ENCODE measurements at regions of chr2 and their contacts with region 1.

Region 1: GRCh38 chr2:39227628-39228412 is 15.9 kb downstream of the CDKL4 start:
- DNase-seq: peak; percentile 58 to 83 (median 78)
- ATAC-seq: peak; percentile 93
- H3K4me3 ChIP-seq: peak overlapping the region; percentile 31
- H3K4me3 Mint-ChIP-seq: peak overlapping the region; percentile 49 to 85 (median 76)
- H3K27ac ChIP-seq: no peak overlapping the region
- H3K27ac Mint-ChIP-seq: peak overlapping the region in 4 of 9 donors; percentile 38 to 88 (median 65)
- H3K4me1 ChIP-seq: peaks cover 4 to 9% of the 10 kb centered on the region in 2 donors
- H3K4me1 Mint-ChIP-seq: peaks cover 8 to 43% (median 21%) of the 10 kb centered on the region in 7 donors
- H3K27me3 ChIP-seq: no peaks in the 10 kb centered on the region
- H3K27me3 Mint-ChIP-seq: peaks cover 0 to 6% (median 0%) of the 10 kb centered on the region in 5 donors

Region 2: DNA sequence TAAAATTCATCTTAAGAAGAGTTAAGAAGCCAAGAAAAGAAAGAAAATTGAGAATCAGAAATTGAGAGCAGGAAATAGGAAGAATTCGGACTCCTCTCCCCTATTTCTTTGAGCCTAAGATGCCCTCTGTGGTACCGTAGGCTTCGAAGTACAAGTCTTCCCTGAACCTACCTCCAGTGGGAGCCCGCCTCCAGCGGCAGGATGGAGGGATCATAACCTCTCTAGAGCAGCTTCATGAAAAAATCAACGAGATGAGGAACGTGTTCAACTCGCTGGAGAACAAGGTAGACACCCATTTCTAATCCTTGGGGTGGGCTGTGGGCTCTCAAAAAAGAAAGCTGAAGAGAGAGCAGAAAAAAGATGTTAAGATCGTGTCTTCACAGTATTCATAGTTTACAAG is 301.8 kb before region 1 on chr2:
- CTCF ChIA-PET with region 1: no interaction called
- POLR2A ChIA-PET with region 1: no interaction called
- intact Hi-C with region 1: no loop called
- DNase-seq: no peak
- ATAC-seq: no peak
- H3K4me3 ChIP-seq: no peak overlapping the region
- H3K4me3 Mint-ChIP-seq: no peak overlapping the region
- H3K27ac ChIP-seq: no peak overlapping the region
- H3K27ac Mint-ChIP-seq: no peak overlapping the region
- H3K4me1 ChIP-seq: no peaks in the 10 kb centered on the region
- H3K4me1 Mint-ChIP-seq: no peaks in the 10 kb centered on the region
- H3K27me3 ChIP-seq: no peaks in the 10 kb centered on the region
- H3K27me3 Mint-ChIP-seq: peaks cover 0 to 31% (median 7%) of the 10 kb centered on the region in 5 donors

Region 3: GRCh38 chr2:38947240-38948239 is 280.3 kb before region 1 on chr2:
- CTCF ChIA-PET with region 1: interaction called, 78 read pairs
- POLR2A ChIA-PET with region 1: interaction called, 3 read pairs
- intact Hi-C with region 1: loop called in 1 of 2 experiments (anchors 1 kb)
- DNase-seq: peak; percentile 8 to 57 (median 35)
- ATAC-seq: peak; percentile 67
- H3K4me3 ChIP-seq: no peak overlapping the region
- H3K4me3 Mint-ChIP-seq: no peak overlapping the region
- H3K27ac ChIP-seq: no peak overlapping the region
- H3K27ac Mint-ChIP-seq: peak overlapping the region in 1 of 9 donors; percentile 13
- H3K4me1 ChIP-seq: no peaks in the 10 kb centered on the region
- H3K4me1 Mint-ChIP-seq: peaks cover 0 to 3% (median 0%) of the 10 kb centered on the region in 7 donors
- H3K27me3 ChIP-seq: no peaks in the 10 kb centered on the region
- H3K27me3 Mint-ChIP-seq: peaks cover 0 to 6% (median 0%) of the 10 kb centered on the region in 5 donors

Region 4: GRCh38 chr2:39059366-39059952 is 168.4 kb before region 1 on chr2:
- CTCF ChIA-PET with region 1: interaction called, 198 read pairs
- POLR2A ChIA-PET with region 1: interaction called, 9 read pairs
- intact Hi-C with region 1: loop called (anchors 1 kb)
- DNase-seq: peak in 7 of 9 donors; percentile 15 to 73 (median 65)
- ATAC-seq: peak; percentile 45
- H3K4me3 ChIP-seq: no peak overlapping the region
- H3K4me3 Mint-ChIP-seq: no peak overlapping the region
- H3K27ac ChIP-seq: no peak overlapping the region
- H3K27ac Mint-ChIP-seq: peak overlapping the region in 2 of 9 donors; percentile 63 to 64
- H3K4me1 ChIP-seq: no peaks in the 10 kb centered on the region
- H3K4me1 Mint-ChIP-seq: peaks cover 0 to 33% (median 0%) of the 10 kb centered on the region in 7 donors
- H3K27me3 ChIP-seq: no peaks in the 10 kb centered on the region
- H3K27me3 Mint-ChIP-seq: no peaks in the 10 kb centered on the region

Region 5: DNA sequence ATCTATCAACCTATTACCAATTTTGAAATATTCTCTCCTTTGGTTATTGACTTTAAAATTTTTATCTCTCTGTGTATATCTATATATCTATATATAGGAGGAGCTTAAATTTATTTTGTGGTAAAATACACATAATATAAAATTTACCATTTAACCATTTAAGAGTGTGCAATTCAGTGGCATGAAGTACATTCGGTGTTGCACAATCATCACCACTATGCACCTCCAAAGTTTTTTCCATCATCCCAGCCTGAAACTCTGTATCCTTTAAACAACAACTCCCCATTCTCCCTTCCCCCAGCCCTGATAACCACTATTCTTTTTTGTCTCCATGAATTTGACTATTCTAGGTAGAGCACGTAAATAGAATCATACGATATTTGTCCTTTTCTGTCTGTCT is 33.1 kb before region 1 on chr2:
- CTCF ChIA-PET with region 1: interaction called, 3 read pairs
- POLR2A ChIA-PET with region 1: no interaction called
- intact Hi-C with region 1: loop called in 1 of 2 experiments (anchors 5 kb)
- DNase-seq: no peak
- ATAC-seq: no peak
- H3K4me3 ChIP-seq: no peak overlapping the region
- H3K4me3 Mint-ChIP-seq: no peak overlapping the region
- H3K27ac ChIP-seq: no peak overlapping the region
- H3K27ac Mint-ChIP-seq: no peak overlapping the region
- H3K4me1 ChIP-seq: no peaks in the 10 kb centered on the region
- H3K4me1 Mint-ChIP-seq: peaks cover 0 to 2% (median 0%) of the 10 kb centered on the region in 7 donors
- H3K27me3 ChIP-seq: no peaks in the 10 kb centered on the region
- H3K27me3 Mint-ChIP-seq: no peaks in the 10 kb centered on the region

Region 6: DNA sequence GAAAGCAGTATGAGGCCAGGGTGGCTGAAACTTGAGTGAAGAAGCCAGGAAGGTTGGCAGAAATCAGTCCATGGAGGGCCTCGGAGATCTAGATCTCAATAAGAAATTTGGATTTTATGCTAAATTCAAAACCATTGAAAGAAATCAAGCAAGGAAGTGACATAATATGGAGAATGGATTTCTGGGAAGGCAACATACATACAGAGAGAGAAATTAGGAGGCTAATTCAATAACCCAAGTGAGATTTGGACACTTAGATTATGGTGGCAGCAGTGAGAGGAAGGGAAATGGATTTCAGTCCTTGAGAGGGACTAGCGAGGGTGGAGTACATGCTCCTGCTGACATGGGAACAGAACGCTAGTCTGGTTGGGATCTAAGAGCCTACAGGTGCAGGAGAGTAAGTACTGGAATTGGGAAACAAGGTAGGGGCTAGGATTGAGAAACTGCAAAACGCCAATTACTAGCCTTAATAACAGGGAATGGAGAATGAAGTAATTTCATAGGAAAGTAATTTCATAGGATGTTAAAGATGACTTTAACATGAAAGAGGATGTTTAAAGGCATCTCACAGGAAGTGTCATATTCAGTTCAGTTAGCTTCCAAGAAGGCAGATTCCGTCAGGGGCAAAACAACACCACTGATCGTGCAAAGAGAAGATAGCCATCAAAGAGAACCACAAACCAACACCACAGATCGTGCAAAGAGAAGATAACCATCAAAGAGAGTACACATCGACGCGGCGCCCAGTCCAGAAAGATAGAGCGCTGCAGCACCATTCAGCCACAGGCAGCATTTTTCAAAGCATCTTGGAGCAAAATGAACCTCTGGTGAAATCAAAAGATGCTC is 11.3 kb before region 1 on chr2:
- CTCF ChIA-PET with region 1: interaction called, 15 read pairs
- POLR2A ChIA-PET with region 1: interaction called, 4 read pairs
- intact Hi-C with region 1: loop called (anchors 1 kb)
- DNase-seq: peak; percentile 18 to 92 (median 81)
- ATAC-seq: peak; percentile 94
- H3K4me3 ChIP-seq: peak overlapping the region; percentile 20
- H3K4me3 Mint-ChIP-seq: peak overlapping the region; percentile 18 to 84 (median 60)
- H3K27ac ChIP-seq: peak overlapping the region; percentile 1
- H3K27ac Mint-ChIP-seq: peak overlapping the region; percentile 32 to 97 (median 75)
- H3K4me1 ChIP-seq: peaks cover 29 to 38% of the 10 kb centered on the region in 2 donors
- H3K4me1 Mint-ChIP-seq: peaks cover 26 to 72% (median 38%) of the 10 kb centered on the region in 7 donors
- H3K27me3 ChIP-seq: no peaks in the 10 kb centered on the region
- H3K27me3 Mint-ChIP-seq: peaks cover 0 to 2% (median 0%) of the 10 kb centered on the region in 5 donors

Region 7: DNA sequence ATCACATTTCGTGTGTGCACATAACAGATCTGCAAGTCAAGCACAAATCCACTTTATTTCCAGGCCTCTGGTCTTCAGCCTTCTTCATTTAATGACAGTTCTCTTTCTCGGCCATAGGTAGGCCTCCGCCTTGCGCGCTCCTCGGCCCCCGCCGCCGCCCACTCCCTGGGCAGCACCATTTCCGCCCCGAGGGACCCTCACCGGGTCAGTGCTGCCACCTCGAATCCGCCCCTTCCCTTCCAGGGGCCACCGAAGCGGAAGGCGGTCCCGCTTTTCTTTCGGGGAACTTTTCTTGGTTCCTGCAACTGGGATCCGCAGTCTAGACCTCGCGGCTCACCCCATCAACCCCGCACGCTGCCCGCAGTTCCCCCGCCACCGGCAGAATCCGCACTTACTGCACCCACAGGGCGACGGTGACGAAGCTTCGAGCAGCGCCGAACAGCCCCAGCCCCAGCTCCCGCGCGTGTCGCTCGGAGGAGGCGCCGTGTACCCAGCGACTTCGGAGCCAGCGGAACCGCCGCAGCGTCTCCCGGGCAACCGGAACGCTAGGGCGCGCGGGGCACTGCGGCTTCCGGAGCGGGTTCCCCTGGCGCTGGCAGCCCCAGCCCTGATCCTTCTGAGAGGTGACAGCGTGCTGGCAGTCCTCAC is 15.8 kb after region 1 on chr2 and contains the start of gene CDKL4:
- CTCF ChIA-PET with region 1: interaction called, 8 read pairs
- POLR2A ChIA-PET with region 1: no interaction called
- intact Hi-C with region 1: loop called in 1 of 2 experiments (anchors 2 kb)
- DNase-seq: peak in 7 of 9 donors; percentile 24 to 56 (median 43)
- ATAC-seq: peak; percentile 75
- H3K4me3 ChIP-seq: peak within 1 kb of the TSS; percentile 56
- H3K4me3 Mint-ChIP-seq: peak within 1 kb of the TSS; percentile 80 to 92 (median 87)
- H3K27ac ChIP-seq: no peak within 1 kb of the TSS
- H3K27ac Mint-ChIP-seq: peak within 1 kb of the TSS in 8 of 9 donors; percentile 50 to 88 (median 70)
- H3K4me1 ChIP-seq: no peaks in the 10 kb centered on the region
- H3K4me1 Mint-ChIP-seq: peaks cover 0 to 31% (median 21%) of the 10 kb centered on the region in 7 donors
- H3K27me3 ChIP-seq: no peaks in the 10 kb centered on the region
- H3K27me3 Mint-ChIP-seq: no peaks in the 10 kb centered on the region
- total RNA-seq, gene CDKL4: 0.82 TPM in 1 of 5 experiments, not detected in the others

Region 8: GRCh38 chr2:39416140-39416539 is 188.3 kb after region 1 on chr2:
- CTCF ChIA-PET with region 1: no interaction called
- POLR2A ChIA-PET with region 1: no interaction called
- intact Hi-C with region 1: no loop called
- DNase-seq: no peak
- ATAC-seq: no peak
- H3K4me3 ChIP-seq: no peak overlapping the region
- H3K4me3 Mint-ChIP-seq: no peak overlapping the region
- H3K27ac ChIP-seq: no peak overlapping the region
- H3K27ac Mint-ChIP-seq: no peak overlapping the region
- H3K4me1 ChIP-seq: no peaks in the 10 kb centered on the region
- H3K4me1 Mint-ChIP-seq: peaks cover 9 to 63% (median 45%) of the 10 kb centered on the region in 7 donors
- H3K27me3 ChIP-seq: no peaks in the 10 kb centered on the region
- H3K27me3 Mint-ChIP-seq: no peaks in the 10 kb centered on the region